Activated CD4-positive, alpha-beta memory T cell treated with anti-CD3 and anti-CD28 coated beads for 36 hours (primary cell): ENCODE measurements at regions of chr19 and their contacts with region 1.

Region 1: GRCh38 chr19:48290771-48291488 is 21.0 kb downstream of the ZNF114 start:
- DNase-seq: peak; percentile 64
- H3K4me3 Mint-ChIP-seq: peak overlapping the region; percentile 69
- H3K27ac Mint-ChIP-seq: no peak overlapping the region
- H3K4me1 Mint-ChIP-seq: peaks cover 7% of the 10 kb centered on the region
- H3K27me3 Mint-ChIP-seq: no peaks in the 10 kb centered on the region

Region 2: DNA sequence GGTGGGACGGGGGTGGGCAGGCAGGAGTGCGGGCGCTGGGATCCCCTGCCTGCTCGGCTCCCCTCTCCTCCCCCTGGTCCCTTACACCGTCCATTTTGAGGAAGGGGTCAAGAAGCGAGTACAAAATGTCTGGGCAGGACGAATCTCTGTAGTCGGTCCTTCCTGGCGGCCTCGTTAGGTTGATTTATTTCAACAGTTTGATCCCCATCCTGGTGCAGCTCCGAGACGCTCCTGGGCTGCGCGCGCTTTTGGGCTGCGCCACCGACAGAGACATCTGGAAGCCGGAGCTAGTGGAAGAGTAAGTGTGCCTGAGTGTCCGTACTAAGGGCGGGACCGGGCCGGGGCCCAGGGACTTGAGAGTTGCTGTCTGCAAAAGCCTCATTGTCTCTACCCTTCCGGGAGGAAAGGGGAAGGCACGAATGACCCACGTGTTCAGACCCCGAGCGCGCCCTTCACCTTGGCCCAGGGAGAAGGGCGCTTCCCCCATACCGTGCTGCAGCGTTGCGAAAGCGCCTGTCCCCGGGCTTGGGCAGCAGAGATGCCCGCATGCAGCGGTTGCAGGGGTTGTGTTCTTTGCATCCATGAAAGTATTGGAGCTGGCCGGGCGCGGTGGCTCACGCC is 19.3 kb before region 1 on chr19:
- CTCF ChIA-PET with region 1: interaction called, 16 read pairs
- POLR2A ChIA-PET with region 1: no interaction called
- intact Hi-C with region 1: loop called (anchors 1 kb)
- DNase-seq: peak; percentile 29
- H3K4me3 Mint-ChIP-seq: peak overlapping the region; percentile 70
- H3K27ac Mint-ChIP-seq: no peak overlapping the region
- H3K4me1 Mint-ChIP-seq: peaks cover 10% of the 10 kb centered on the region
- H3K27me3 Mint-ChIP-seq: peaks cover 12% of the 10 kb centered on the region